Naive thymus-derived CD4-positive, alpha-beta T cell (primary cell): ENCODE measurements at regions of chr5 and their contacts with region 1.

Region 1: GRCh38 chr5:138575194-138576015 is at the start of gene HSPA9:
- DNase-seq: peak; percentile 92 to 99 (median 98)
- ATAC-seq: peak; percentile 89
- H3K4me3 ChIP-seq: peak within 1 kb of the TSS; percentile 91
- H3K4me3 Mint-ChIP-seq: peak within 1 kb of the TSS; percentile 94 to 99 (median 97)
- H3K27ac ChIP-seq: peak within 1 kb of the TSS; percentile 94
- H3K27ac Mint-ChIP-seq: peak within 1 kb of the TSS; percentile 100
- H3K4me1 ChIP-seq: peaks cover 10 to 15% of the 10 kb centered on the region in 2 donors
- H3K4me1 Mint-ChIP-seq: peaks cover 15 to 48% (median 43%) of the 10 kb centered on the region in 7 donors
- H3K27me3 ChIP-seq: no peaks in the 10 kb centered on the region
- H3K27me3 Mint-ChIP-seq: peaks cover 0 to 4% (median 0%) of the 10 kb centered on the region in 5 donors
- total RNA-seq, gene HSPA9: 152 to 274 (median 185) TPM

Region 2: GRCh38 chr5:138213161-138214029 is 362.0 kb before region 1 on chr5 and contains the start of gene CDC23:
- CTCF ChIA-PET with region 1: no interaction called
- POLR2A ChIA-PET with region 1: no interaction called
- intact Hi-C with region 1: loop called in 1 of 2 experiments (anchors 1 kb)
- DNase-seq: peak; percentile 65 to 95 (median 92)
- ATAC-seq: peak; percentile 98
- H3K4me3 ChIP-seq: peak within 1 kb of the TSS; percentile 97
- H3K4me3 Mint-ChIP-seq: peak within 1 kb of the TSS; percentile 92 to 99 (median 98)
- H3K27ac ChIP-seq: peak within 1 kb of the TSS; percentile 91
- H3K27ac Mint-ChIP-seq: peak within 1 kb of the TSS; percentile 95 to 98 (median 96)
- H3K4me1 ChIP-seq: peaks cover 0 to 8% of the 10 kb centered on the region in 2 donors
- H3K4me1 Mint-ChIP-seq: peaks cover 14 to 32% (median 27%) of the 10 kb centered on the region in 7 donors
- H3K27me3 ChIP-seq: no peaks in the 10 kb centered on the region
- H3K27me3 Mint-ChIP-seq: no peaks in the 10 kb centered on the region
- total RNA-seq, gene CDC23: 13.0 to 39.6 (median 25.5) TPM

Region 3: DNA sequence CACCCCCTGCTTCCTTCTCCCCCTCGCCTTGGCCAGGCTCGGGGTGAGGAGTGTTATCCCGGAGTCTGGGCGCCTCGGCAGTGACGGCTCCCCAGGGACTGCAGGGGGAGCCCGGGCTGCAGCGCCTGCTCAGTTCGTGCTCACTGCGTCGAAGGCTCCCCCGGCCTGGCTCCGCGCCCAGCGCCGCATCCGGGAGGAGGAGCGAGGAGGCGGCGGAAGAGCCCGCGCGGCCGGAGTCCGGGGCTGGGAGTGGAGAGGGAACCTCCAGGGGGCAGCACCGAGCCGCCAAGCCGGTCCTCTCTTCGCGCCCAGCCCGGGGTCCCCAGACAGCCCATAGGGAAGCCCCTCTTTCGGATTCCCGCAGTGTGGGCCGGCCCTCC is 111.4 kb before region 1 on chr5:
- CTCF ChIA-PET with region 1: interaction called, 5 read pairs
- POLR2A ChIA-PET with region 1: interaction called, 10 read pairs
- intact Hi-C with region 1: loop called (anchors 1 kb)
- DNase-seq: peak; percentile 90 to 97 (median 94)
- ATAC-seq: peak; percentile 71
- H3K4me3 ChIP-seq: peak overlapping the region; percentile 95
- H3K4me3 Mint-ChIP-seq: peak overlapping the region; percentile 78 to 93 (median 89)
- H3K27ac ChIP-seq: peak overlapping the region; percentile 91
- H3K27ac Mint-ChIP-seq: peak overlapping the region; percentile 76 to 97 (median 91)
- H3K4me1 ChIP-seq: peaks cover 31 to 43% of the 10 kb centered on the region in 2 donors
- H3K4me1 Mint-ChIP-seq: peaks cover 36 to 54% (median 50%) of the 10 kb centered on the region in 7 donors
- H3K27me3 ChIP-seq: no peaks in the 10 kb centered on the region
- H3K27me3 Mint-ChIP-seq: peaks cover 0 to 20% (median 0%) of the 10 kb centered on the region in 5 donors

Region 4: GRCh38 chr5:138654281-138654867 is 79.0 kb after region 1 on chr5:
- CTCF ChIA-PET with region 1: interaction called, 3 read pairs
- POLR2A ChIA-PET with region 1: no interaction called
- intact Hi-C with region 1: loop called in 1 of 2 experiments (anchors 1 kb)
- DNase-seq: peak in 8 of 9 donors; percentile 63 to 84 (median 80)
- ATAC-seq: peak; percentile 88
- H3K4me3 ChIP-seq: no peak overlapping the region
- H3K4me3 Mint-ChIP-seq: peak overlapping the region; percentile 4 to 72 (median 36)
- H3K27ac ChIP-seq: no peak overlapping the region
- H3K27ac Mint-ChIP-seq: peak overlapping the region in 8 of 9 donors; percentile 44 to 93 (median 80)
- H3K4me1 ChIP-seq: peaks cover 15 to 26% of the 10 kb centered on the region in 2 donors
- H3K4me1 Mint-ChIP-seq: peaks cover 17 to 34% (median 27%) of the 10 kb centered on the region in 7 donors
- H3K27me3 ChIP-seq: peaks cover 0 to 36% of the 10 kb centered on the region in 2 donors
- H3K27me3 Mint-ChIP-seq: peaks cover 80 to 92% (median 86%) of the 10 kb centered on the region in 5 donors

Region 5: DNA sequence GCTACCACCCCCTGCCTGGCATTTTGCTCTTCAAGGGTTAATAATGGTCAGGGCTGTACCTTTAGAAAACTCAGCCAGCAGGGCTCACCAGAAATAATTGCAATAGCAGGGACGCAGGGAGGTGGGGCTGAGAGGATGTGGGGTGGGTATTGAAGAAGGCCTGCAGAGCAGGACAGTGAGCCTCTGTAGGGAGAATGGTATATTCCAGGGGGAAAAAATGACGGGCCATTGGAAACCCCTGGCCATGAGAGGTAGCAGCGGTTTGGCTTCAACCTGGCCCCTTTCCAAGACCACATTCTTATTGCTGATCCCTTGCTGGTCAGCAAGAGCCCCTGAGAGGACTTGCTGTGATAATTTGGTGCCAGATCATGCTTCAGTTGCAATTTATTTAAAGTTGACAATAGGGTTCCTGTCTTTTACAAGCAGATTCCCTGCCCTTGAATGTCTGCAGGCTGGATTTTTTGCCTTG is 141.1 kb after region 1 on chr5:
- CTCF ChIA-PET with region 1: no interaction called
- POLR2A ChIA-PET with region 1: no interaction called
- intact Hi-C with region 1: no loop called
- DNase-seq: no peak
- ATAC-seq: no peak
- H3K4me3 ChIP-seq: no peak overlapping the region
- H3K4me3 Mint-ChIP-seq: no peak overlapping the region
- H3K27ac ChIP-seq: no peak overlapping the region
- H3K27ac Mint-ChIP-seq: no peak overlapping the region
- H3K4me1 ChIP-seq: no peaks in the 10 kb centered on the region
- H3K4me1 Mint-ChIP-seq: peaks cover 0 to 1% (median 0%) of the 10 kb centered on the region in 7 donors
- H3K27me3 ChIP-seq: no peaks in the 10 kb centered on the region
- H3K27me3 Mint-ChIP-seq: peaks cover 36 to 54% (median 50%) of the 10 kb centered on the region in 5 donors

Region 6: DNA sequence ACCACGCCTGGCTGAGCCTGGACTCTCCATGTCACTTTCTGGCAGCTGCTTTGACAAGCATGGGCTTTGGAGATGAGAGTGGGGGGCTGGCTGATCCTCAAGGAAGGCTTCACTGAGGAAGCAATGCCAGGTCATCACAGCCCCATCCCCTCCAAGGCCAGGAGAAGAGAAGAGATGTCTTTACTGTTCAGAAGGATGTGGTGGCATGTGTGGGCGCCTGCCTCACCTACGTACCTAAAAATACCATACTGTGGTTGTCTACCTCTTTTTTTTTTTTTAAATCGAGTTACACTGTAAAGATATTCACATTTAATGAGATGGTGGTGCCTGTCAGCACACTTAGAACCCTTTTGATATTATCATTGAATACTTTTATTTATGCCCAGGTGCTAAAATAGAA is 151.4 kb after region 1 on chr5:
- CTCF ChIA-PET with region 1: no interaction called
- POLR2A ChIA-PET with region 1: no interaction called
- intact Hi-C with region 1: no loop called
- DNase-seq: peak in 1 of 9 donors; percentile 27
- ATAC-seq: no peak
- H3K4me3 ChIP-seq: no peak overlapping the region
- H3K4me3 Mint-ChIP-seq: no peak overlapping the region
- H3K27ac ChIP-seq: no peak overlapping the region
- H3K27ac Mint-ChIP-seq: no peak overlapping the region
- H3K4me1 ChIP-seq: no peaks in the 10 kb centered on the region
- H3K4me1 Mint-ChIP-seq: peaks cover 0 to 17% (median 8%) of the 10 kb centered on the region in 7 donors
- H3K27me3 ChIP-seq: no peaks in the 10 kb centered on the region
- H3K27me3 Mint-ChIP-seq: peaks cover 24 to 64% (median 51%) of the 10 kb centered on the region in 5 donors

Region 7: GRCh38 chr5:139022528-139022927 is 447.1 kb after region 1 on chr5:
- CTCF ChIA-PET with region 1: no interaction called
- POLR2A ChIA-PET with region 1: no interaction called
- intact Hi-C with region 1: no loop called
- DNase-seq: no peak
- ATAC-seq: no peak
- H3K4me3 ChIP-seq: no peak overlapping the region
- H3K4me3 Mint-ChIP-seq: no peak overlapping the region
- H3K27ac ChIP-seq: no peak overlapping the region
- H3K27ac Mint-ChIP-seq: no peak overlapping the region
- H3K4me1 ChIP-seq: no peaks in the 10 kb centered on the region
- H3K4me1 Mint-ChIP-seq: peaks cover 0 to 4% (median 0%) of the 10 kb centered on the region in 7 donors
- H3K27me3 ChIP-seq: no peaks in the 10 kb centered on the region
- H3K27me3 Mint-ChIP-seq: no peaks in the 10 kb centered on the region

Region 8: DNA sequence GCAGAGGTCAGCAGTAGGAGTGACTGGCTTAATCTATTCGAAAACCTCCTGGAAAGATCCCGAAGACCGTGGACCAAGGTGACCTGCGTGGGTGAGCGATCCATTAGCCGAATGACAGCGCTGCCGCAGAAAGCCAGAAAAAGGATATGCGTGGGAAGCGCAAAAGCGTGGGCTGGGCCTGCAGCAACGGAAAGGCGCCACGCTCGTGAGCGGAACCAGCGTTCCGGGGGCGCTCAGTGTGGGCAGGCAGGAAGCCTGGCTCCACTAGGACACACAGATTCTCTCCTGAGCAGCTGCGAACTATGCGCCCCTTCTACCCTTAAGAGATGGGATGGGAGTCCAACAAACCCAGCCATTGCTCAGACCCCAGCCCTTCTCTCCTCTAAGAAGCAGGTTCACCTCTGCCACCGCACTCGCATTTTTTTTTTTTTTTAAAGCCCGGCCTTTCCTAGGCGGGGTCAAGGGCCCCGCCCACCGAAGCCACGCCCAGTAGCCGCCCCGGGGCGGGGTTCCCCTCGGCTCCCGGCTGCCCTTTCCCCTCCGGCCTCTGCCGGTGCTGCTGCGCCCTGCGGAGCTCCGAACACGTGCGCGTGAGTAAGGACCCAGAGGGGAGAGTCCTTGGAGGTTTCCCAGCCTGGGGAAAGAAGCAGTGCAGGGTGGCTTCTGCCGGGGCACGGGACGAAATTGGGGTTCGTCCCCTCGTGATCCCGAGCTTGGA is 698.3 kb after region 1 on chr5:
- CTCF ChIA-PET with region 1: no interaction called
- POLR2A ChIA-PET with region 1: interaction called, 3 read pairs
- intact Hi-C with region 1: loop called in 1 of 2 experiments (anchors 1 kb)
- DNase-seq: peak; percentile 71 to 95 (median 83)
- ATAC-seq: peak; percentile 99
- H3K4me3 ChIP-seq: peak overlapping the region; percentile 71
- H3K4me3 Mint-ChIP-seq: peak overlapping the region; percentile 77 to 92 (median 90)
- H3K27ac ChIP-seq: peak overlapping the region; percentile 69
- H3K27ac Mint-ChIP-seq: peak overlapping the region; percentile 54 to 92 (median 85)
- H3K4me1 ChIP-seq: peaks cover 26 to 27% of the 10 kb centered on the region in 2 donors
- H3K4me1 Mint-ChIP-seq: peaks cover 30 to 54% (median 47%) of the 10 kb centered on the region in 7 donors
- H3K27me3 ChIP-seq: no peaks in the 10 kb centered on the region
- H3K27me3 Mint-ChIP-seq: peaks cover 0 to 3% (median 0%) of the 10 kb centered on the region in 5 donors

Region 9: DNA sequence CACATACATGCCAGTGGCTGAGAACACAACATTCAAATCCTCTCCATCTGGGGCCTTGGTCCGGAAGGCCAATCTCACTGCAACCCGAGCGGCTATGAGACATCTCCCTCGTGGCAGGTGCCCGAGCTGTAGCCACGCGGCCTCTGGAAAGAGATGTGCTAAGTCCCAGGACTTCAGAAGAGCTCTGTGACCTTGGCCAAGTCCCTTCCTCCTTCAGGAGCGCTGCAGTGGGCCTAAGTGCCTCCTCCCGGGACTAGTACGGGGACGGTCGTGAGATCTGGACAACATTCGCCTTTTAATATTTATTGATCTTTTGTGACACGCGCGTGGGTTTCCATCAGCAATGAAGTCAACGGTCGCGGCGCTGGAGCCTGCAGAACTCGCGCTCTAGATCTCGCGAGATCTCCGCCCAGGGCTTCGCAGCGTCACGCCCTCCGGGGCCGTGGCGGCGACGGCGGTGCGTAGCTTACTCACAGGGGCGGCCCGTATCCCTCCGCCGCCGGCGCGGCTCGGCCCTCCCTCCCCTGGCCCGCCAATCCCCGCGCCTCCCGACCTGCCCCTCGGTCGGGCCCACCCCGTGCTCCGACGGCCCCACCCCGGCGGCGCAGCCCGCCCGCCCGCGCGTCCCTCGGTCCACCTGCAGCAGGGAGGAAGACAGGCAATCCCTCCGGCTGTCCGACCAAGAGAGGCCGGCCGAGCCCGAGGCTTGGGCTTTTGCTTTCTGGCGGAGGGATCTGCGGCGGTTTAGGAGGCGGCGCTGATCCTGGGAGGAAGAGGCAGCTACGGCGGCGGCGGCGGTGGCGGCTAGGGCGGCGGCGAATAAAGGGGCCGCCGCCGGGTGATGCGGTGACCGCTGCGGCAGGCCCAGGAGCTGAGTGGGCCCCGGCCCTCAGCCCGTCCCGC is 985.6 kb after region 1 on chr5 and contains the start of gene UBE2D2:
- CTCF ChIA-PET with region 1: no interaction called
- POLR2A ChIA-PET with region 1: interaction called, 4 read pairs
- intact Hi-C with region 1: loop called (anchors 1 to 10 kb)
- DNase-seq: peak; percentile 95 to 98 (median 97)
- ATAC-seq: peak; percentile 94
- H3K4me3 ChIP-seq: peak within 1 kb of the TSS; percentile 85
- H3K4me3 Mint-ChIP-seq: peak within 1 kb of the TSS; percentile 90 to 100 (median 98)
- H3K27ac ChIP-seq: peak within 1 kb of the TSS; percentile 92
- H3K27ac Mint-ChIP-seq: peak within 1 kb of the TSS; percentile 88 to 98 (median 95)
- H3K4me1 ChIP-seq: peaks cover 26 to 36% of the 10 kb centered on the region in 2 donors
- H3K4me1 Mint-ChIP-seq: peaks cover 28 to 39% (median 34%) of the 10 kb centered on the region in 7 donors
- H3K27me3 ChIP-seq: no peaks in the 10 kb centered on the region
- H3K27me3 Mint-ChIP-seq: no peaks in the 10 kb centered on the region
- total RNA-seq, gene UBE2D2: 145 to 214 (median 184) TPM